ENCODE measurements at regions of chr9 and their contacts with region 1.

Region 1: DNA sequence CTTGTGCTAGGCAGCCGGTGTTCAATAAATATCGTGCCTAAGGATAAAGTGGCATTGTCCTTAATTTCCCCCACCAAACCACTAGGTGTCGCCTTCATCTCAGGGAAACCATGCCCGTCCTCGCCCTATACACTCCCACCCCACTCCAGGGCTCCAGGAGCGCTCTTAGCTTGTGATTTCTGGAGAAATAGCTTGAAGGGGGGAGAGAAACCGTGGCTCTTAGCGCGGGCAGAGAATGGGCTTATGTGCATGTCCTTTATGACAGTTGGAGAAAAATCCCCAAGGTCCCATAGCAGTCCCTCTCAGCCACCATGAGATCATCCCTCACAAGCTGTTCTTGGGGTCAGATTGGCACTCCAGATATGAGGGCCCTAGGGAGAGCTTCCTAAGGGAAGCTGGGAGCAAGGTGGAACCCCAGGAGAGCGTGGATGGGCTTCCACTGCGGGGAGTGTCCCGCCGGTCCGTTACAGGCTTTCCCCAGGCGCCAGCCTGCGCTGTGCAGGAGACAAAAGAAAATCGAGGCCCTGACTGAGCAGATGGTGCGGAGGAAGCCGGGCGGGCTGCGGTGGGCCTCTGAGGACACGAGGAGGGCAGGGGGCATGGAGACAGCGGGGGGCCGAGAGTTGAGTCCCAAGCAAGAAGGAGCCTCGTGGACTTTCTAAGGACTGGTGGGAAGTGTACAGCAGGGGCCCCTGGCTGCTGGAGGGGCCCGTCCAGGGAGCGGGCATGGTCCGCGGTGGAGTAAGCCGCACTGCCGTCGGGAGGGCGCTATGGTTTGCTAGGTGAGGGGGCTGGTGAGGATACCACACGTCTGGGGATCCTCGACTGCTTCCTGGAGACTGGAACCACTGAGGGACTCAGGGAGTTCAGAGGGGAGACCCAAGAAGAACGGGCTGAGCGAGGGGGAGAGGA is 750 bp upstream of the NPR2 start:
- DNase-seq: peak in 8 of 10 donors; percentile 60 to 84 (median 68)
- H3K4me3 ChIP-seq: peak overlapping the region; percentile 38 to 77 (median 64)
- H3K27ac ChIP-seq: peak overlapping the region in 53 of 59 donors; percentile 2 to 84 (median 66)
- H3K27me3 ChIP-seq: no peaks in the 10 kb centered on the region
- CTCF ChIP-seq: peak; percentile 74 to 95 (median 86)

Region 2: GRCh38 chr9:35829084-35829763 is 38.6 kb after region 1 on chr9 and contains the start of gene TMEM8B:
- intact Hi-C with region 1: loop called in 1 of 2 experiments (anchors 2 kb)
- DNase-seq: peak; percentile 94 to 98 (median 97)
- H3K4me3 ChIP-seq: peak within 1 kb of the TSS; percentile 59 to 91 (median 80)
- H3K27ac ChIP-seq: peak within 1 kb of the TSS in 53 of 59 donors; percentile 35 to 95 (median 82)
- H3K27me3 ChIP-seq: no peaks in the 10 kb centered on the region
- CTCF ChIP-seq: peak in 11 of 56 donors; percentile 6 to 41 (median 15)
- total RNA-seq, gene TMEM8B: 40.1 to 83.0 (median 60.2) TPM

Region 3: DNA sequence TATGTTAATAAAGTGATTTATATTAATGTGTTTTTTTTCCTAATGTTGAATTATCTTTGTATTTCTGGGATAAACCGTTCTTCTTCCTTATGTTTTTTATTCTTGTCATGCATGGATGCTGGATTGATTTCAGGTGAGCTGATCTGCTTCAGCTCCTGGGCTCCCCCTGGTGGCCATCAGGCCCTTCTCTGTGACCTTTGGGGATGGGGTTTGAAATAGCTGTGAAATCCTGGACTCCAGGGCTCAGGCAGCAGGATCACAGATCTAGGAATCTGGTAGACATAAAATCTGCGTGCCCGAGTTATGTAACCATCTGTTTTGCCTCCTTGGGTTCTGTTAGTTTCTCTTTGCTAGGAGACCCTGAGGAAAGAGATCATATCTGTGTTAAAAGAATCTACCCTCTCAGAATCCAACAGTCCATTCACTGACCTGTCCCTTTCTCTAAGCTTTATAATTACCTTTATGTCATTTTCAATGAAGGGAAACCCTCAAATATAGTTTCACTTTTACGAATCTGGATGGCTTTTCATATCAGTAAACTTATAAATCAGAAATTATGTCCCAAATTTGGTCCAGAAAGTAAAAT is 91.7 kb after region 1 on chr9:
- intact Hi-C with region 1: loop called (anchors 1 to 5 kb)
- DNase-seq: peak; percentile 68 to 93 (median 84)
- H3K4me3 ChIP-seq: no peak overlapping the region
- H3K27ac ChIP-seq: peak overlapping the region in 6 of 59 donors; percentile 2 to 16 (median 10)
- H3K27me3 ChIP-seq: no peaks in the 10 kb centered on the region
- CTCF ChIP-seq: peak; percentile 80 to 99 (median 97)

Region 4: GRCh38 chr9:36023260-36024048 is 232.8 kb after region 1 on chr9:
- intact Hi-C with region 1: loop called in 1 of 2 experiments (anchors 10 kb)
- DNase-seq: peak; percentile 29 to 75 (median 64)
- H3K4me3 ChIP-seq: no peak overlapping the region
- H3K27ac ChIP-seq: no peak overlapping the region
- H3K27me3 ChIP-seq: no peaks in the 10 kb centered on the region
- CTCF ChIP-seq: peak; percentile 54 to 85 (median 74)

Measured in dorsolateral prefrontal cortex (tissue), 120 donors.